ENCODE measurements at regions of chr4 and their contacts with region 1.

Region 1: GRCh38 chr4:12852338-12853307 is 631.5 kb downstream of the RAB28 start:
- DNase-seq: no peak
- H3K4me3 ChIP-seq: no peak overlapping the region
- H3K27ac ChIP-seq: no peak overlapping the region
- H3K4me1 ChIP-seq: no peaks in the 10 kb centered on the region
- H3K27me3 ChIP-seq: no peaks in the 10 kb centered on the region
- CTCF ChIP-seq: peak; percentile 38 to 57 (median 40)
- POLR2A ChIP-seq: no peak

Region 2: GRCh38 chr4:13548984-13549546 is 696.4 kb after region 1 on chr4:
- intact Hi-C with region 1: loop called (anchors 5 kb)
- DNase-seq: peak; percentile 93
- H3K4me3 ChIP-seq: peak overlapping the region in 1 of 2 donors; percentile 36
- H3K27ac ChIP-seq: no peak overlapping the region
- H3K4me1 ChIP-seq: no peaks in the 10 kb centered on the region
- H3K27me3 ChIP-seq: no peaks in the 10 kb centered on the region
- CTCF ChIP-seq: peak; percentile 80 to 85 (median 85)
- POLR2A ChIP-seq: no peak